Naive thymus-derived CD4-positive, alpha-beta T cell (primary cell): ENCODE measurements at regions of chr15 and their contacts with region 1.

Region 1: GRCh38 chr15:75869446-75869845 is 26.2 kb downstream of the UBE2Q2 start:
- DNase-seq: no peak
- ATAC-seq: no peak
- H3K4me3 ChIP-seq: no peak overlapping the region
- H3K4me3 Mint-ChIP-seq: no peak overlapping the region
- H3K27ac ChIP-seq: no peak overlapping the region
- H3K27ac Mint-ChIP-seq: no peak overlapping the region
- H3K4me1 ChIP-seq: no peaks in the 10 kb centered on the region
- H3K4me1 Mint-ChIP-seq: peaks cover 22 to 41% (median 35%) of the 10 kb centered on the region in 7 donors
- H3K27me3 ChIP-seq: no peaks in the 10 kb centered on the region
- H3K27me3 Mint-ChIP-seq: no peaks in the 10 kb centered on the region

Region 2: DNA sequence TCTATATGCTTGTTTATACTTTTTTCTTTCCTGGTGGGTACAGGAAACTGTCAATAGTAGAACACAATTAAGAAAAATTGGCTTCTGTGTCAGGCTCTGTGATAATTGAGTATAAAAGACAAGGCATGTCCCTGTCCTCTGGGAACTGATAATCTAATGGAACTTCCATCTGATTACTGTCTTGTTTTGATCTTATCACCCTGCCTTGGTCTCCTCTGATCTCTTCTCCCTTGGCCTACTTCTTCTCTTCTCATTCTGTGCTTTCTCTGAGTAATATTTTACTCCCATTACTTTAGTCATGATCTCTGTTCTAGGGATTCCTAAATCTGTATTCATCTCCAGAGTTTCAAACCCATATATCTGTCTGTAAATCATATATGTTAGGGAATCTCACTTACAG is 11.6 kb before region 1 on chr15:
- CTCF ChIA-PET with region 1: no interaction called
- POLR2A ChIA-PET with region 1: no interaction called
- intact Hi-C with region 1: loop called in 1 of 2 experiments (anchors 2 kb)
- DNase-seq: no peak
- ATAC-seq: no peak
- H3K4me3 ChIP-seq: no peak overlapping the region
- H3K4me3 Mint-ChIP-seq: no peak overlapping the region
- H3K27ac ChIP-seq: no peak overlapping the region
- H3K27ac Mint-ChIP-seq: peak overlapping the region in 3 of 9 donors; percentile 11 to 63 (median 40)
- H3K4me1 ChIP-seq: peaks cover 0 to 7% of the 10 kb centered on the region in 2 donors
- H3K4me1 Mint-ChIP-seq: peaks cover 24 to 60% (median 42%) of the 10 kb centered on the region in 7 donors
- H3K27me3 ChIP-seq: no peaks in the 10 kb centered on the region
- H3K27me3 Mint-ChIP-seq: no peaks in the 10 kb centered on the region